MCF 10A (cell line): ENCODE measurements at regions of chr6 and their contacts with region 1.

Region 1: GRCh38 chr6:73732845-73733675 is 37.1 kb downstream of the CD109 start:
- DNase-seq: peak; percentile 87
- H3K4me3 Mint-ChIP-seq: no peak overlapping the region
- H3K27ac Mint-ChIP-seq: no peak overlapping the region
- H3K4me1 Mint-ChIP-seq: peaks cover 26% of the 10 kb centered on the region
- H3K27me3 Mint-ChIP-seq: no peaks in the 10 kb centered on the region
- CTCF ChIP-seq: peak; percentile 82

Region 2: DNA sequence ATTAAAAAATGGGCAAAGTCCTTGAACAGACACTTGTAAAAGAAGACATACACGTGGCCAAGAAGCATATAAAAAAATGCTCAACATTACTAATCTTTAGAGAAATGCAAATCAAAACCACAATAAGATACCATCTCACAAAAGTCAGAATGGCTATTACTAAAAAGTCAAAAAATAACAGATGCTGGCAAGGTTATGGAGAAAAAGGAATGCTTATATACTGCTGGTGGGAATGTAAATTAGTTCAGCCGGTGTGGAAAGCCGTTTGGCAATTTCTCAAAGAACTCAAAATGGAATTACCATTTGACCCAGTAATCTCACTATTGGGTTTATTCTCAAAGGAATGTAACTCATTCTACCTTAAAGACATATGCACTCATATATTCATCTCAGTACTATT is 674.3 kb before region 1 on chr6:
- CTCF ChIA-PET with region 1: no interaction called
- POLR2A ChIA-PET with region 1: no interaction called
- intact Hi-C with region 1: no loop called
- DNase-seq: no peak
- H3K4me3 Mint-ChIP-seq: no peak overlapping the region
- H3K27ac Mint-ChIP-seq: no peak overlapping the region
- H3K4me1 Mint-ChIP-seq: peaks cover 4% of the 10 kb centered on the region
- H3K27me3 Mint-ChIP-seq: no peaks in the 10 kb centered on the region
- CTCF ChIP-seq: no peak

Region 3: DNA sequence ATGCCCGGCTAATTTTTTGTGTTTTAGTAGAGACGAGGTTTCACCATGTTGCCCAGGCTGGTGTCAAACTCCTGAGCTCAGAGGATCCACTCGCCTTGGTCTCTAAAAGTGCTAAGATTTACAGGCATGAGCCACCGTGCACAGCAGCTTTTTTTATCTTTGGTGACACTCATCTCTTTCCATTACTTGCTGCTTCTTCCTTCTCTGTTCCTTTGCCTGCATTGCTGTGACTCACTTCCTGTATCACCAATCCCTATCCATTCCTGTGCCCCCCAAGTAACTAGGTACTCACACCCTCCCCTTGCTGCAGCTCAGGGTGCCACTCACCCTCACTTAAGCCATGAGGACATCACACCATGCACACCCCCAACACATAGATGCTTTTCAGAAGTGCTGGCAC is 532.3 kb before region 1 on chr6:
- CTCF ChIA-PET with region 1: no interaction called
- POLR2A ChIA-PET with region 1: no interaction called
- intact Hi-C with region 1: no loop called
- DNase-seq: no peak
- H3K4me3 Mint-ChIP-seq: no peak overlapping the region
- H3K27ac Mint-ChIP-seq: no peak overlapping the region
- H3K4me1 Mint-ChIP-seq: peaks cover 6% of the 10 kb centered on the region
- H3K27me3 Mint-ChIP-seq: no peaks in the 10 kb centered on the region
- CTCF ChIP-seq: no peak

Region 4: GRCh38 chr6:73520688-73521350 is 212.2 kb before region 1 on chr6 and contains the start of gene EEF1A1:
- CTCF ChIA-PET with region 1: no interaction called
- POLR2A ChIA-PET with region 1: no interaction called
- intact Hi-C with region 1: no loop called
- DNase-seq: peak; percentile 100
- H3K4me3 Mint-ChIP-seq: peak within 1 kb of the TSS; percentile 88
- H3K27ac Mint-ChIP-seq: peak within 1 kb of the TSS; percentile 99
- H3K4me1 Mint-ChIP-seq: peaks cover 12% of the 10 kb centered on the region
- H3K27me3 Mint-ChIP-seq: no peaks in the 10 kb centered on the region
- CTCF ChIP-seq: no peak
- total RNA-seq, gene EEF1A1: 13,507 and 14,346 TPM in 2 replicates

Region 5: GRCh38 chr6:73675466-73676098 is 57.5 kb before region 1 on chr6:
- CTCF ChIA-PET with region 1: interaction called, 203 read pairs
- POLR2A ChIA-PET with region 1: interaction called, 17 read pairs
- intact Hi-C with region 1: loop called (anchors 1 kb)
- DNase-seq: peak; percentile 90
- H3K4me3 Mint-ChIP-seq: no peak overlapping the region
- H3K27ac Mint-ChIP-seq: no peak overlapping the region
- H3K4me1 Mint-ChIP-seq: peaks cover 18% of the 10 kb centered on the region
- H3K27me3 Mint-ChIP-seq: no peaks in the 10 kb centered on the region
- CTCF ChIP-seq: peak; percentile 85

Region 6: GRCh38 chr6:73695619-73696421 is 37.2 kb before region 1 on chr6 and contains the start of gene CD109:
- CTCF ChIA-PET with region 1: interaction called, 13 read pairs
- POLR2A ChIA-PET with region 1: interaction called, 5 read pairs
- intact Hi-C with region 1: no loop called
- DNase-seq: peak; percentile 85
- H3K4me3 Mint-ChIP-seq: peak within 1 kb of the TSS; percentile 93
- H3K27ac Mint-ChIP-seq: peak within 1 kb of the TSS; percentile 93
- H3K4me1 Mint-ChIP-seq: peaks cover 55% of the 10 kb centered on the region
- H3K27me3 Mint-ChIP-seq: no peaks in the 10 kb centered on the region
- CTCF ChIP-seq: no peak
- total RNA-seq, gene CD109: 91.0 and 94.5 TPM in 2 replicates

Region 7: DNA sequence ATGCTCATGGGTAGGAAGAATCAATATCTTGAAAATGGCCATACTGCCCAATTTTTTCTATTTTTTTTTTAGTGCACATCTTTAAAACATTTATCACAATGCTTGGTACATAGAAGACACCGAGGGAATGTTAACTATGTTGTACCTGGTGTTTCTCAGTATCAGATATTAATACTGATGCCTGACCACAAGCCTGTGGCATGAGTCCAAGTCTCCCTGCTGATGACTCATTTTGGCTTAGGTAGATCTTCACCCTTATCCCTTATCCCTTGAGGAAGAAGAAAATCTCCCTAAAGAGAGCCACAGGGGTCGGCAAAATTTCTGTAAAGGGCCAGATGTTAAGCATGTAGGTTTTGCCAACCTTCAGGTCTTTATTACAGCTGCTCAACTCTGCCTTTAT is 22.6 kb before region 1 on chr6:
- CTCF ChIA-PET with region 1: interaction called, 23 read pairs
- POLR2A ChIA-PET with region 1: interaction called, 3 read pairs
- intact Hi-C with region 1: no loop called
- DNase-seq: peak; percentile 94
- H3K4me3 Mint-ChIP-seq: no peak overlapping the region
- H3K27ac Mint-ChIP-seq: peak overlapping the region; percentile 1
- H3K4me1 Mint-ChIP-seq: peaks cover 13% of the 10 kb centered on the region
- H3K27me3 Mint-ChIP-seq: no peaks in the 10 kb centered on the region
- CTCF ChIP-seq: no peak

Region 8: GRCh38 chr6:73747289-73747688 is 14.2 kb after region 1 on chr6:
- CTCF ChIA-PET with region 1: interaction called, 30 read pairs
- POLR2A ChIA-PET with region 1: no interaction called
- intact Hi-C with region 1: no loop called
- DNase-seq: no peak
- H3K4me3 Mint-ChIP-seq: no peak overlapping the region
- H3K27ac Mint-ChIP-seq: no peak overlapping the region
- H3K4me1 Mint-ChIP-seq: peaks cover 6% of the 10 kb centered on the region
- H3K27me3 Mint-ChIP-seq: no peaks in the 10 kb centered on the region
- CTCF ChIP-seq: no peak

Region 9: GRCh38 chr6:75363304-75363703 is 1630.2 kb after region 1 on chr6:
- CTCF ChIA-PET with region 1: no interaction called
- POLR2A ChIA-PET with region 1: no interaction called
- intact Hi-C with region 1: no loop called
- DNase-seq: no peak
- H3K4me3 Mint-ChIP-seq: no peak overlapping the region
- H3K27ac Mint-ChIP-seq: no peak overlapping the region
- H3K4me1 Mint-ChIP-seq: no peaks in the 10 kb centered on the region
- H3K27me3 Mint-ChIP-seq: no peaks in the 10 kb centered on the region
- CTCF ChIP-seq: no peak